Adrenal gland (tissue), 19 donors: ENCODE measurements at regions of chr10 and their contacts with region 1.

Region 1: DNA sequence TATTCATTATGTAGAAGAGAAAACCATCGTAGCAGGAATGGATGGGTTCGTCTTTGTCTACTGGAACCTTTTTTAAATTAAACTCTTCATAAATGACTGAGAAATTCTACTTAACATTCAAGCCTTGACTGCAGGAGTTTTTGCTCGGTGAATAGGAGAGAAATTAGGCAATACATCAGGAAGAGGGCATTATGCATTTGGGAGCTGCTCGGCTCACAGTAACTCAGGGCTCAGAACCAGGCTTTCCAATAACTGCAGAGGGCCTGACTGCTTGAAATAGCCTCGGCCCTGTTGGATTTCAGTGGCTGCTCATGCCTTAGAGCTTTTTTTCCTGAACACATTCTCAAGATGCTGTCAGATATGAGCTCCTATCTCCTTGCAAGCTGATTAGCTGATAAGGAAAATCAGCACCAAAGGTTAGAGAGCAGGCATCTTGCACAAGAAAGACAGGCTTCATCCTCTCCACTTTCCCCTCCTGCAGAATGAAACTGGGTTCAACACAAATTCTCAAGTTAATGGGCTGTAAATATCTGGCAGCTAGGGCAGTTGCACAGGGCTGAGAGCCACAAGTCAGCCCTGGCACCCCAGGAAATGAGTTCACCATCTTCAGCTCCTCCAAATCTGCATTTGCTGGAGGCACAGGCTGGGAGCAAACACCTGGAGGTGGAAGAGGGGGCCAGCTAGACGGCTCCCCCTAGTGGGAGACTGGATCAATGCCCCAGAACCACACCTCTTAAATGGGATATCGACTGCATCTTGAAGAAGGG is 24.3 kb downstream of the TECTB start:
- DNase-seq: peak; percentile 38 to 79 (median 62)
- H3K4me3 ChIP-seq: no peak overlapping the region
- H3K27ac ChIP-seq: no peak overlapping the region
- H3K4me1 ChIP-seq: no peaks in the 10 kb centered on the region
- H3K27me3 ChIP-seq: no peaks in the 10 kb centered on the region
- CTCF ChIP-seq: peak; percentile 57 to 76 (median 74)
- POLR2A ChIP-seq: no peak

Region 2: GRCh38 chr10:111756217-111757061 is 551.1 kb before region 1 on chr10:
- intact Hi-C with region 1: loop called in 1 of 2 experiments (anchors 5 kb)
- DNase-seq: peak; percentile 27 to 82 (median 56)
- H3K4me3 ChIP-seq: no peak overlapping the region
- H3K27ac ChIP-seq: no peak overlapping the region
- H3K4me1 ChIP-seq: no peaks in the 10 kb centered on the region
- H3K27me3 ChIP-seq: no peaks in the 10 kb centered on the region
- CTCF ChIP-seq: peak; percentile 17 to 56 (median 46)
- POLR2A ChIP-seq: no peak

Region 3: DNA sequence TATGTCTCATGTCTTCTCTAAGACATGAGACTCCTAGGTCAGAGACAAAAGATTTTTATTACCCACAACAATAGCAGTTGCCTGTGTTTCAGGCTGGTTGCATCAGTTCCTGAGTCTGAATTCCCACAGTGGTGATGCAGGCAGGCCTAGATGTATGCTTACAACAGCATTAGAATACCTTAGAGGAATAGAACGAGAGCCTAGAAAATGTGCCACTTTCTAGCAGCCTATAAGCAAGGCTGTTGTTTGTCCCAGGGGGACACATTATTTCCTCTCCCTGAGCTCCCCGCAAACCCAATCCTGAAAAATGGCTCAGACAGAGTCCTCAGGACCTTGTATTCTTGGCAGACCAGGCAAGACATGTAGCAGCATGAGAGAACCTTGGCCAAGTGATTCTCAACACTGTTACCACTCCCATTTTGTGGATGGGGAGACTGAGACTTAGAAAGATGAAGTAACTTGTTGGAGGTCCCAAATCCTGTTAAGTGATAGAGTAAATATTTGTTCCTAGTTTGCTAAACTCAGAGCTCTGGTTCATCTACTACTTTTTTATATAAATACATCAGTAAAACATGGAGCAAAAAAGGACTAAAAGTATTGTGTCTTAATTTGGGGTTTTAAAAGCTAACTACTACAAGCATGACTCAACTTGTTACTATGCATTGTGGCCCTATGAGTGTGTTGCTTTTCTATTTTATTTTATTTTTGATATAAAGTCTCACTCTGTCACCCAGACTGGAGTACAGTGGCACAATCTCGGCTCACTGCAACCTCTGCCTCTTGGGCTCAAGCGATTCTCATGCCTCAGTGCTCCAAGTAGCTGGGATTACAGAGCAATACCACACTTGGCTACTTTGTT is 153.7 kb after region 1 on chr10:
- intact Hi-C with region 1: no loop called
- DNase-seq: no peak
- H3K4me3 ChIP-seq: no peak overlapping the region
- H3K27ac ChIP-seq: no peak overlapping the region
- H3K4me1 ChIP-seq: no peaks in the 10 kb centered on the region
- H3K27me3 ChIP-seq: no peaks in the 10 kb centered on the region
- CTCF ChIP-seq: no peak
- POLR2A ChIP-seq: no peak